HEK293 (cell line): ENCODE measurements at regions of chr5 and their contacts with region 1.

Region 1: DNA sequence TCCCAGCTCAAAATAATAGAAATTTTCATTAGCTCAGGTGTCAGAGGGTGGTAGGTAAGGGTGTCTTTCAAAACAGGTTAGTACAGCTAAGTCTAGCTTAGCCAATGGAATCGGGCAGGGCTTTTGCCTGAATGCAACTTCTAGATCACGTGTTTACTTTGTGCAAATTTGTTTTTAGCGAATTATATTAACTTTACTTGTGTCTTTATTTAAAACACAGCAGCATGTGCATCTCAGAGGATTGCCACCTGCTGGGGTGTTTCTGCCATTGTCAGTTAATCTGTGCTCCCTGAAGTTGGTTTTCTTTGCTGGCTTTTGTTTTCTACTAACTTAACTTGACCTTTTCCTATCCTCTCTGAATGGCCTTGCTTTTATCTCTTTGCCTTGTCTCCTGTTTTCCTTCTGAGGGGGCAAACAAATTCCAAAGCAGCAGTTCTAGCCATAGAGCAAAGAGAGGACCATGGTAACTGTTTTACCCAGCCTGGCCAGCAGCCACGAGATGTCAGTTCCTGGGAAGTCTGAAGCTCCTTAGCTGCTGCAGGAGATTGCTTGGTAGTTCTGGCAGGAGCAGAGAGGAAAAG is 67.6 kb downstream of the ARHGEF28 start:
- H3K4me3 ChIP-seq: no peak overlapping the region
- H3K27ac ChIP-seq: no peak overlapping the region
- H3K4me1 ChIP-seq: peaks cover 6% of the 10 kb centered on the region
- CTCF ChIP-seq: peak; percentile 37; the same call in 1 of the 2 replicates

Region 2: DNA sequence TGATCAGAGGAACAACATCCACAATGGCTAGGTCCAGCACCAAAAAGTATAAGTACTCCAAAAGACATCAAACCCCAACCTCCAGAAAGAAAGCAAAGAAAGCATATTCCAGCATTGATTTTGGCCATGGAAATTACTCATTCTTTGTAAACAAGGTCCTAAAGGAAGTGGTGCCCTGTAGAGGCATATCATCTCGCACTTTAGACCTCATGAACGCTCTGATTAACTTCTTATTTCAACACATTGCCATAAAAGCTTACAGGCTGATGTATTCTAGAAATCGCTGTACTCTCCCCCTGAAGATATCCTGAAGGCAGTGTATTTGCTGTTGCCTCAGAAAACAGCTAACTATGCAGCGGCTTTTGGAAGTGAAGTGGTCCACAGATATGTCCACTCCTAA is 959.8 kb before region 1 on chr5:
- CTCF ChIA-PET with region 1: no interaction called
- POLR2A ChIA-PET with region 1: no interaction called
- H3K4me3 ChIP-seq: no peak overlapping the region
- H3K27ac ChIP-seq: no peak overlapping the region
- H3K4me1 ChIP-seq: no peaks in the 10 kb centered on the region
- CTCF ChIP-seq: no peak

Region 3: DNA sequence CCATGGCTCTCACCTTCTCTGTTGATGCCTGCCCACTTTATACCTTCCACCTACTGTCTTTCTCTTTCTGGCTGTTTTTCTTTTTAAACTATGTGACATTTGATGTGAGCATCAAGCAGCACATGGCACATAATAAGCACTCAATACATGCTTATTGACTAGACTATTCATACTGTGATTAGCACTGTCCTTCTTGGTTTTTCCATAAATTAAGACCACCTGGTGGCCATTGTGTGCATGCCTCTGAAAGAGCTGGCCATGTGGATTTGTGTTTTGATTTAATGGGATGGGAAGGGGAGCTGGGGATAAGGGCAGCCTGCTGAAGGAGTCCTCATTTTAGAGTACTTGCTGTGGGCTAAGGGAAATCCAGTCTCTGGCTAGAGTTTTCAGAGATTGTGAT is 11.8 kb after region 1 on chr5:
- CTCF ChIA-PET with region 1: interaction called, 14 read pairs
- POLR2A ChIA-PET with region 1: no interaction called
- H3K4me3 ChIP-seq: no peak overlapping the region
- H3K27ac ChIP-seq: no peak overlapping the region
- H3K4me1 ChIP-seq: peaks cover 8% of the 10 kb centered on the region
- CTCF ChIP-seq: no peak